ENCODE measurements at regions of chr9 and their contacts with region 1.

Region 1: DNA sequence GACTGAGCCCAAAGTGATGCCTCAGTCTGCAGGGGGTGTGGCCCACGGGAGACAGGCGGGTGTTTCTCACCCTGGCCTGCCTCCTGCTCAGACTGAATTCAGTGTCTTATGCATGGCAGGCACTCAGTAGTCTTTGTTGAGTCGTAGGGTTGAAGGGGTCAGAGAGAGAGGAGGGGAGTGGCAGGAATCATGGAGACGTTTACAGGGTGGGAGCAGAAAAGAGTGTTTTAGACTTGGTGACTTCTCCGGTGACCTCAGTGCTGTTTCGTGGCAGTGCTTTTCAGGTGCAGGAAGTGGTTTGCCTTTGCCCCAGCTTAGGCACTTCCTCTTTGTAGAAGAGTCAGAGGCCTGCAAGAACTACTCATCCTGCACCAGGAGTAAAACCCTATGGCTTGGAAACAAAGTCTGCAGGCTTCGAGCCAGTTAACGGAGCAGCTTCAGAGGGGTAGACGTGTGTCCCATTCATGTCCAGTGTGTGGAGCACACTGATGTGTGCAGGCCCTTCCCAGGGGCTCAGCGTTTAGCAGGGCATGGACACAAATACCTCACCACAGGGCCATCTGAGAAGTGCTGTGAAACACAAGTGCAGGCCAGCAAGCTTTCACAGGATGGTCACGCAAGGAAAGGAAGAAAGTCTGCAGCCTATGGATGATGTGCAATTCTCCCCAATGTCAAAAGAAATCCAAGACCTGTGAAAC is 24.5 kb upstream of the SEMA4D start:
- DNase-seq: peak; percentile 83
- ATAC-seq: peak; percentile 95
- H3K4me3 ChIP-seq: peak overlapping the region; percentile 24; the same call in 1 of the 2 replicates
- H3K27ac ChIP-seq: peak overlapping the region; percentile 85
- H3K4me1 ChIP-seq: peaks cover 49% of the 10 kb centered on the region
- H3K27me3 ChIP-seq: no peaks in the 10 kb centered on the region
- CTCF ChIP-seq: no peak
- EP300 ChIP-seq: 0 out of 4 replicates have a peak, but pooled peaks of 1 of the 2 experiments have one; percentile 49
- POLR2A ChIP-seq: peak; percentile 51; the same call in 1 of the 2 replicates
- RAD21 ChIP-seq: no peak

Region 2: DNA sequence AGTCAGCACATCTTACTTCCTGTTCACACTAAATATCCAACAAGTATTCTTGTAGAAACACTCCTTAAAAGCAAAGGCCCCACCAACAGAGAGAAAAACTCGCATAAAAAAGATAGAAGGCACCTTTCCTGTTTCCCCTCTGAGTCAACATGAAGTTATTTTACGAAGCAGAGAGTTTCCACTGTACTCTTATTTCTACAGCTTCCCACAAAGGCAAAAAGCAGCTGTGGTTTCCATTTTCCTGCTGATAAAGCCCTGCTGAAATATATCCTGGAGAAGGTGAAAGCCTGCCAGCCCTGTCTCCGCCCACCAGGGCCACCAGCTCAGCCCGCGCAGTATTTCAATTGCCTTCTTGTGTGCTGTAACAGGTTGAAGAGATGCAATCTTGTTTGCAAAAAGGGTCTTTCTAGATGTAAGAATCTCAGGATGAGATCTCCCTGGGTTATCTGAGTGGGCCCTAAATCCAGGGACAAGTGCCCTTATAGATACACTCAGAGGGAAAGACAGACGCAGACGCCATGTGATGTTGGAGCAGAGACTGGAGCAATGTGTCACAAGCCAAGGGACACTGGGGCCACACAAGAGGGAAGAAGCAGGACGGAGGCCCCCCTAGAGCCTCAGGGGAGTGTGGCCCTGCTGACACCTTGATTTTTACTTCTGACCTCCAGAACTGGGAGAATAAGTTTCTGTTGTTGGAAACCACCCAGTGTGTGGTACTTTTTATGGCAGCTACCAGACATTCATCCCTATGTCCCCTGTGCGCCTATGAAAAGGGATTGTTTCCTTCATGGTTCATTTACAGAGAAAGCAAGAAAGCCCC is 44.4 kb before region 1 on chr9:
- CTCF ChIA-PET with region 1: no interaction called
- POLR2A ChIA-PET with region 1: no interaction called
- RAD21 ChIA-PET with region 1: no interaction called
- SMC1A ChIA-PET with region 1: no interaction called
- in situ Hi-C with region 1: no loop called
- intact Hi-C with region 1: no loop called
- DNase-seq: no peak
- ATAC-seq: peak; percentile 38
- H3K4me3 ChIP-seq: no peak overlapping the region
- H3K27ac ChIP-seq: peak overlapping the region; percentile 59
- H3K4me1 ChIP-seq: peaks cover 31% of the 10 kb centered on the region
- H3K27me3 ChIP-seq: no peaks in the 10 kb centered on the region
- CTCF ChIP-seq: no peak
- EP300 ChIP-seq: no peak
- POLR2A ChIP-seq: no peak
- RAD21 ChIP-seq: no peak

Region 3: DNA sequence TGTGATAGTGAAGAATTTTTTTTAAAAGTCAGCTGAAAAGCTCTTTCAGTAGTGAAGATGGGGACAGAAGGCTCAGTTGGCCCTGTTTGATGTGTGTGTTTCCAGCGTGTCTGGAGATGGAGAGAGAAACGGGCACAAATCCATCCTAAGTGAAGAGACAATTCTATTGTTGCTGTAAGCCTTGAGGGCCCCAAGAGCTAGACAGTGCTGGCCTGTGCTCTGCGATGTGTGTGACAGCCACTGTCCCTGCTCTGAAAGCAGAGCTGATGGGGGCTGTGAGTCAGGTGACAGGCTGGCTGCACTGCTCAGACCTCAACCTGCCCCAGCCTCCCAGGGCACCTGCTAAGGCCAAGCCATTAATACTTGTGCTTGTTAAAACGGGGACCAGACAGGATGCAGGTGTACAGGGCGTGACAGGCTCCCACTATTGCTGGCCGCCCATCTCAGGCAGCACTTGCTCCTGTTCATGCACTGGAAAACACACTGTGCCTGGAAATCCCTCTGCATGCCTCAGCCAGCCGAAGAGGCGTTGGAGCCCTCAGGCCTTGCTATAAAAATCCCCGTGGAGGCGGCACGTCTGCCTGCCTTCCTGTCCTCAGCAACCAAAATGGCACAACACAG is 20.1 kb after region 1 on chr9:
- CTCF ChIA-PET with region 1: interaction called, 34 read pairs
- POLR2A ChIA-PET with region 1: interaction called, 5 read pairs
- RAD21 ChIA-PET with region 1: interaction called, 10 read pairs
- SMC1A ChIA-PET with region 1: interaction called, 12 read pairs
- in situ Hi-C with region 1: no loop called
- intact Hi-C with region 1: no loop called
- DNase-seq: no peak
- ATAC-seq: peak; percentile 78
- H3K4me3 ChIP-seq: no peak overlapping the region
- H3K27ac ChIP-seq: no peak overlapping the region
- H3K4me1 ChIP-seq: peaks cover 12% of the 10 kb centered on the region
- H3K27me3 ChIP-seq: no peaks in the 10 kb centered on the region
- CTCF ChIP-seq: no peak
- EP300 ChIP-seq: no peak
- POLR2A ChIP-seq: no peak
- RAD21 ChIP-seq: no peak

Measured in GM12878 (cell line).